ENCODE measurements at regions of chr1 and their contacts with region 1.

Region 1: GRCh38 chr1:203769505-203770343 is 4.7 kb downstream of the LAX1 start:
- DNase-seq: no peak
- ATAC-seq: peak; percentile 52
- H3K4me3 ChIP-seq: no peak overlapping the region
- H3K4me3 Mint-ChIP-seq: peak overlapping the region in 7 of 10 donors; percentile 13 to 96 (median 52)
- H3K27ac ChIP-seq: no peak overlapping the region
- H3K27ac Mint-ChIP-seq: peak overlapping the region; percentile 68 to 99 (median 90)
- H3K4me1 ChIP-seq: peaks cover 21% of the 10 kb centered on the region in 2 donors
- H3K4me1 Mint-ChIP-seq: peaks cover 25 to 64% (median 35%) of the 10 kb centered on the region in 7 donors
- H3K27me3 ChIP-seq: no peaks in the 10 kb centered on the region
- H3K27me3 Mint-ChIP-seq: no peaks in the 10 kb centered on the region

Region 2: DNA sequence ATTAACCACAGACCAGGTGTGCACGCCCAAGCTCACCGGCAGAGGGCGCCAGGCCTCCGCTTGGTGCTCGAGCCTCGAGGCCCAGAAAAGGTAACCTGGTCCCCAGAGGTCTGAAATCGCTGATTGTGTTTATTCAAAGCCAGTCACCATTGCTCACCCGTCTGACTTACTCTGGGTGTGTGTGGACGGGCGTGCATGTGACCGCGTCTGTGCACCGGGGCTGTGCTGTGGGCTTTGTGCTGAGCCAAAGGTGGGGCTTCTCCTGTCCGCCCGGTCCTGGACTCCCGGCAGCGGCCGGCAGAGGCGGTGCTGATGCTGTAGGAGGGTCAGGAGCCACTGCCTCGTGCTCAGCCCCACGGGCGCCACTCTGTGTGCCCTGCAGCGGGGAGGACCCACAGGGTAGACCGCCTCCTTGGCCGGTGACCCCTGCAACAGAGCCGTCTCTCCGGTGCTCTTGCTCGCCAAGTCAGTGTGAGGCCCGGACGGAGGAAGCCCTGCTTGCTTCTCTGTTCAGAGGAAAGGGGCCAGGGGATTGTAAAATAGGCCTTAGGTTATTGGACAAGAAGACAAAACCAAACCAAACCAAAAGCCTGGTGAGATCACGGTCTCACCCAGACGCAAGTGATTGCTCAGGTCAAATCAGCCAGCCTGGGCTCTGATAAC is 496.4 kb before region 1 on chr1:
- CTCF ChIA-PET with region 1: no interaction called
- POLR2A ChIA-PET with region 1: interaction called, 3 read pairs
- intact Hi-C with region 1: loop called (anchors 5 to 10 kb)
- DNase-seq: peak; percentile 84 to 95 (median 91)
- ATAC-seq: peak; percentile 82
- H3K4me3 ChIP-seq: peak overlapping the region; percentile 55
- H3K4me3 Mint-ChIP-seq: peak overlapping the region; percentile 76 to 83 (median 80)
- H3K27ac ChIP-seq: peak overlapping the region; percentile 75
- H3K27ac Mint-ChIP-seq: peak overlapping the region; percentile 83 to 98 (median 94)
- H3K4me1 ChIP-seq: peaks cover 11 to 64% of the 10 kb centered on the region in 2 donors
- H3K4me1 Mint-ChIP-seq: peaks cover 20 to 71% (median 65%) of the 10 kb centered on the region in 7 donors
- H3K27me3 ChIP-seq: no peaks in the 10 kb centered on the region
- H3K27me3 Mint-ChIP-seq: no peaks in the 10 kb centered on the region

Region 3: DNA sequence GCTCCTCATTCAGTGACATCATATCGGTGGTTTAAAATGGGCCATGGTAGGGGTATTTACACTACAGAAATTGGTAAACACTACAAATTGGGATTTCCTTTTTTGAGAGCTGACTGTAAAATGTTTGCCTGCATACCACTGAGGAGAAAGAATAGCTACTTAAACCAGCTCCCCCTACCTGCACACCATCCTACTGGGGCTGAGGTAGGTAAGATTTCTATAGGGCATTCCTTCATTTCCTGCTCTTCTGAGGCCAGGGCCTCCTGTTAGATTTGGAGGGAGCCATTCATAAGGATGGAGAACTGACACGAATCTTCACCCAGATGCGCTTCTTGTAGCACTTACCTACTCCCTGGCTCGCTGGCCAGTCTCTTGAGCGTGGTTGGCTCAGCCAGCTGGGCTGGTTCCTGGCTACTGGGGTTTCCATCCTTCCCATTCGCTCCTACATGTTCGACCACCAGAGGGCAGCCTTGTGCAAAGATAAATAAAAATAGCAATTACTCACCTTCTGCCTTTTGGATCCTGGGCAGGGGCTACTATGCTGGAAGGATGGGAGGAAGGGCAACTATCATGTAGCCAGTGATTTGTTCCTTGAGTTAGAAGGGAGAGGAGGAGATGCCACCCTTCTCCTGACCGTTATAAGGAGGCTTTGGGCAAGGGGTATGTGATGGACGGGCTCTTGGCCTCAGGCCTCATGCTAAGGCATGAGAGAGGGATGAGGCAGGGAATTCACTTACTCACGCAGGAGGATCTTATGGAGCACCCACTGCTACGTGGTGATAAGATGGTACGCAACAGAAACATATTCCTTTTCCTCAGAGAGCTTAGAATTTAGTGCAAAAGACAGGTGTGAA is 265.1 kb before region 1 on chr1:
- CTCF ChIA-PET with region 1: no interaction called
- POLR2A ChIA-PET with region 1: no interaction called
- intact Hi-C with region 1: loop called in 1 of 2 experiments (anchors 5 kb)
- DNase-seq: peak; percentile 44 to 76 (median 64)
- ATAC-seq: peak; percentile 69
- H3K4me3 ChIP-seq: no peak overlapping the region
- H3K4me3 Mint-ChIP-seq: no peak overlapping the region
- H3K27ac ChIP-seq: no peak overlapping the region
- H3K27ac Mint-ChIP-seq: peak overlapping the region in 2 of 9 donors; percentile 7 to 38
- H3K4me1 ChIP-seq: no peaks in the 10 kb centered on the region
- H3K4me1 Mint-ChIP-seq: peaks cover 0 to 12% (median 8%) of the 10 kb centered on the region in 7 donors
- H3K27me3 ChIP-seq: no peaks in the 10 kb centered on the region
- H3K27me3 Mint-ChIP-seq: peaks cover 0 to 20% (median 0%) of the 10 kb centered on the region in 5 donors

Region 4: DNA sequence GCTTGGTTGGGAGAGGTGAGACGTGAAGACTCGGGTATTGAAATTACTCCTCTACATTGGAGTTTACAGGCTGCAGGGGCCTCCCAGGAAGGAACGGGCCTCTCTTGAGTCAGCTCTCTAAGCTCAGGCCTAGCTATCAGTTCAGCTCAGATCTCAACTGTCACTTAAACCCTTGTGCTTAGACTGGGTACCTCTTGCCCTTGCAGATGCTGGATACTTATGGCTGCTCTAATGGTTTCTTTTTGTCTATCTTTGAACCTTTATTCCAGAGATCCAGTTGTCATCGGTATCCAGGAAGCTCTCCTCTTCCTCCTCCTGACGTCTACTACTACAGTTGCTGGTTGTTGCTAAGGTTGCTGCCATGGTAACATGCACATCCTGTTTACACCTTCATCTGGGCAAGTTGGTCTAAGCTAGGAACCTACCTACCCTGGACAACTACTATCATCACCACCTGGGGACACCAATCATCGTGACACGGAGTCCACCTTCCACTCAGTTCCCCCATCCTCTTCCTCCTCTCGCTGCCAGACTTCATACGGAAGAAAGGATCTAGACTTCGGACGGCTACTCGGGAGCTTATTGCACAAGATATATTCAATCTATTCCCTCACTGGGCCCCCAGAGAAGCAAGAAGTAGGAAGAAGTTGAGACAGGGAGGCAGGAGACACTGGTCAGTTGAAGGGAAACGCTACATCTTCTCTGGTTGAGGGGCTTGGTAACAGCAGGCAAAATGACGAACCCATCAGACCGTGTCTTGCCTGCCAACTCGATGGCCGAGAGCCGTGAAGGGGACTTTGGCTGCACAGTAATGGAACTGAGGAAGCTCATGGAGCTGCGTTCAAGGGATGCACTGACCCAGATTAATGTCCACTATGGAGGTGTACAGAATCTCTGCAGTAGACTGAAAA is 87.0 kb before region 1 on chr1:
- CTCF ChIA-PET with region 1: interaction called, 4 read pairs
- POLR2A ChIA-PET with region 1: interaction called, 5 read pairs
- intact Hi-C with region 1: loop called in 1 of 2 experiments (anchors 2 kb)
- DNase-seq: peak; percentile 26 to 89 (median 80)
- ATAC-seq: peak; percentile 97
- H3K4me3 ChIP-seq: no peak overlapping the region
- H3K4me3 Mint-ChIP-seq: peak overlapping the region; percentile 19 to 72 (median 54)
- H3K27ac ChIP-seq: peak overlapping the region; percentile 67
- H3K27ac Mint-ChIP-seq: peak overlapping the region; percentile 82 to 96 (median 95)
- H3K4me1 ChIP-seq: peaks cover 24 to 26% of the 10 kb centered on the region in 2 donors
- H3K4me1 Mint-ChIP-seq: peaks cover 32 to 57% (median 51%) of the 10 kb centered on the region in 7 donors
- H3K27me3 ChIP-seq: no peaks in the 10 kb centered on the region
- H3K27me3 Mint-ChIP-seq: no peaks in the 10 kb centered on the region

Region 5: GRCh38 chr1:203744075-203744972 is 25.4 kb before region 1 on chr1:
- CTCF ChIA-PET with region 1: interaction called, 10 read pairs
- POLR2A ChIA-PET with region 1: interaction called, 18 read pairs
- intact Hi-C with region 1: loop called (anchors 2 kb)
- DNase-seq: peak in 7 of 9 donors; percentile 20 to 59 (median 51)
- ATAC-seq: peak; percentile 85
- H3K4me3 ChIP-seq: no peak overlapping the region
- H3K4me3 Mint-ChIP-seq: peak overlapping the region; percentile 49 to 90 (median 76)
- H3K27ac ChIP-seq: peak overlapping the region; percentile 65
- H3K27ac Mint-ChIP-seq: peak overlapping the region; percentile 87 to 96 (median 93)
- H3K4me1 ChIP-seq: peaks cover 0 to 15% of the 10 kb centered on the region in 2 donors
- H3K4me1 Mint-ChIP-seq: peaks cover 12 to 31% (median 26%) of the 10 kb centered on the region in 7 donors
- H3K27me3 ChIP-seq: no peaks in the 10 kb centered on the region
- H3K27me3 Mint-ChIP-seq: no peaks in the 10 kb centered on the region

Region 6: DNA sequence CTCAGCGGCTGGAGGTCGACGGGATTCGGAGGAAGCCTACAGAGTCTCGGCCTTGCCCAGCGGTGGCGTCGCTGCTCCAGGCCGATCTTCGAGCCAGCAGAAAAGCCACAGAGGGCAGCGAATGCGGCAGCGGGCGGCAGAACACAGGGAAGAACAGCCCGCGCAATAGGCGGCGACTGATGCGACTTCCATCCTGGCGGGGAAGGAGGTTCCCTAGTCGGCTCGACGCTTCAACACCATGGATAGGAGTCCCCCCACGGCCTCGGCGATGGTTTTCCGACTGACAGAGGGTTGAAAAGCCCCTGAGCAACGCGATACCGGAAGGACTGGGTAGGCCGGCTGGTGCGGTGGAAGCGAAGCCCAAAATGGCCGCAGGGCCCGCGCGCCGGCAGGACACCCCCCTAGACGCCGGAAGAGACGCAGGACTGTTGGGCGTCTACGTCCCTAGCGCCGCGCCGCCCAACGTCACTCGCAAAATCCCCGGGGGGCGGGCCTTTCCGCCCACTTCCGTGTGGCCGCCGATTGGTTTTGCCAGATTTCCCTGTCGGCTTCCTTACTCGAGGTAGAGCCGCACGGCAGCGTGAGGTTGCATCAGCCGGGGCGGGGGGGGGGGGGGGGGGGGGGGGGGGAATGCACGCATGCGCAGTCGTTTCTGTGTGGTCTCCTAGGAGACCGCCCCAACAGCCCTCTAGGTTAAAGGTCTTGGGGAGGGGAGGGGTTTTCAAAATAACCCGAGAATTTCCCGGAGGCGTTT is 641.9 kb after region 1 on chr1 and contains the start of gene PPP1R15B:
- CTCF ChIA-PET with region 1: no interaction called
- POLR2A ChIA-PET with region 1: interaction called, 3 read pairs
- intact Hi-C with region 1: loop called in 1 of 2 experiments (anchors 1 kb)
- DNase-seq: peak; percentile 92 to 99 (median 98)
- ATAC-seq: peak; percentile 91
- H3K4me3 ChIP-seq: peak within 1 kb of the TSS; percentile 99
- H3K4me3 Mint-ChIP-seq: peak within 1 kb of the TSS; percentile 92 to 99 (median 97)
- H3K27ac ChIP-seq: peak within 1 kb of the TSS; percentile 100
- H3K27ac Mint-ChIP-seq: peak within 1 kb of the TSS; percentile 97 to 100 (median 99)
- H3K4me1 ChIP-seq: peaks cover 0 to 5% of the 10 kb centered on the region in 2 donors
- H3K4me1 Mint-ChIP-seq: peaks cover 8 to 23% (median 14%) of the 10 kb centered on the region in 7 donors
- H3K27me3 ChIP-seq: no peaks in the 10 kb centered on the region
- H3K27me3 Mint-ChIP-seq: no peaks in the 10 kb centered on the region
- total RNA-seq, gene PPP1R15B: 69.5 to 175 (median 73.0) TPM

Region 7: GRCh38 chr1:204461331-204462228 is 691.9 kb after region 1 on chr1:
- CTCF ChIA-PET with region 1: no interaction called
- POLR2A ChIA-PET with region 1: no interaction called
- intact Hi-C with region 1: no loop called
- DNase-seq: peak in 6 of 9 donors; percentile 11 to 52 (median 17)
- ATAC-seq: peak; percentile 63
- H3K4me3 ChIP-seq: peak overlapping the region; percentile 37
- H3K4me3 Mint-ChIP-seq: peak overlapping the region; percentile 64 to 85 (median 74)
- H3K27ac ChIP-seq: peak overlapping the region; percentile 63
- H3K27ac Mint-ChIP-seq: peak overlapping the region; percentile 66 to 95 (median 85)
- H3K4me1 ChIP-seq: peaks cover 20 to 54% of the 10 kb centered on the region in 2 donors
- H3K4me1 Mint-ChIP-seq: peaks cover 38 to 74% (median 61%) of the 10 kb centered on the region in 7 donors
- H3K27me3 ChIP-seq: no peaks in the 10 kb centered on the region
- H3K27me3 Mint-ChIP-seq: no peaks in the 10 kb centered on the region

Measured in naive thymus-derived CD4-positive, alpha-beta T cell (primary cell).